ENCODE measurements at regions of chr1 and their contacts with region 1.

Region 1: GRCh38 chr1:245929224-245929623 is 577.9 kb downstream of the SMYD3 start:
- DNase-seq: no peak
- CTCF ChIP-seq: no peak

Region 2: GRCh38 chr1:245939756-245940345 is 10.6 kb after region 1 on chr1:
- CTCF ChIA-PET with region 1: interaction called, 13 read pairs
- POLR2A ChIA-PET with region 1: no interaction called
- DNase-seq: no peak
- CTCF ChIP-seq: no peak

Region 3: DNA sequence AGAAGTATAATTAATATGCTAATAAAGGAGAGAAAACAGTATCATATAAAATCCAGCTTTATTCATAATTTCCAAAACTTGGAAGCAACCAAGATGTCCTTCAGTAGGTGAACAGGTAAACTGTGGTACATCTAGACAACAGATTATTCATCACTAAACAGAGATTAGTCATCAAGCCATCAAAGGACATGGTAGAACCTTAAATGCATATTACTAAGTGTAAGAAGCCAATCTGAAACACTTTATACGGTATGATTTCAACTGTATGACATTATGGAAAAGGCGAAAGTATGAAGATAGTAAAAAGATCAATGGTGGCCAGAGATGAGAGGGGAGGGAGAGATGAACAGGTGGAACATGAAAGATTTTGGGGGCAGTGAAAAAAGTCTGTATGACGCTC is 36.2 kb after region 1 on chr1:
- CTCF ChIA-PET with region 1: no interaction called
- POLR2A ChIA-PET with region 1: no interaction called
- DNase-seq: no peak
- CTCF ChIP-seq: no peak